BJ (cell line): ENCODE measurements at regions of chr9 and their contacts with region 1.

Region 1: GRCh38 chr9:94511134-94511903 is 43.6 kb upstream of the PCAT7 start:
- DNase-seq: no peak
- H3K4me3 ChIP-seq: no peak overlapping the region
- H3K27me3 ChIP-seq: no peaks in the 10 kb centered on the region; the same call in 1 of the 2 replicates
- CTCF ChIP-seq: no peak

Region 2: DNA sequence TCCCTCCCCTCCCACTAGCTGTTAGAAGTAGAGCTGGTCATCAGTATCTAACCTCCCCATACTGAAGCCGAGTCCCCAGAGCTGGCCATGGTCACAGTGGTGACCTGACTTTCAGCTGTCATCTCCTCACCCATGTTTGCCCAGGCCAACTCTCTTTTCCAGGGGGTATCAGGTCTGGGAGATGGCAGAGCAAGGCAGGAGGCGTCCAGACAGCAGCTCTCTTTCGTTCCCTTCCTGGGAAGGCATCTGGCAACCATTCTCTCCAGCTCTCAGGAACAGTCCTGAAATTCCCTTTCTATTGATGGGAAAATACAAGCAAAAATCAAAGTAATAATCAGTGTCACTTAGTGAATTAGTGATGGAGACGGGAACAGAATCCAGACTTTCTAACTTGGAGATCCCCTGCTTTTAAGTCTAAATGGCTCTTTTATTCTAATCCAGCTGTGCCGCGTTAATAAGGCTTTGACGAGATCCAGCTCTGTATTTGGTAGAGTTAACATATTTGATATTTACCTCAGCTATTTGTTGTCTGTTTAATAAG is 193.9 kb after region 1 on chr9:
- CTCF ChIA-PET with region 1: no interaction called
- POLR2A ChIA-PET with region 1: interaction called, 12 read pairs
- DNase-seq: no peak
- H3K4me3 ChIP-seq: no peak overlapping the region
- H3K27me3 ChIP-seq: peaks cover 3% of the 10 kb centered on the region
- CTCF ChIP-seq: no peak